Panc1 (cell line): ENCODE measurements at regions of chr1 and their contacts with region 1.

Region 1: DNA sequence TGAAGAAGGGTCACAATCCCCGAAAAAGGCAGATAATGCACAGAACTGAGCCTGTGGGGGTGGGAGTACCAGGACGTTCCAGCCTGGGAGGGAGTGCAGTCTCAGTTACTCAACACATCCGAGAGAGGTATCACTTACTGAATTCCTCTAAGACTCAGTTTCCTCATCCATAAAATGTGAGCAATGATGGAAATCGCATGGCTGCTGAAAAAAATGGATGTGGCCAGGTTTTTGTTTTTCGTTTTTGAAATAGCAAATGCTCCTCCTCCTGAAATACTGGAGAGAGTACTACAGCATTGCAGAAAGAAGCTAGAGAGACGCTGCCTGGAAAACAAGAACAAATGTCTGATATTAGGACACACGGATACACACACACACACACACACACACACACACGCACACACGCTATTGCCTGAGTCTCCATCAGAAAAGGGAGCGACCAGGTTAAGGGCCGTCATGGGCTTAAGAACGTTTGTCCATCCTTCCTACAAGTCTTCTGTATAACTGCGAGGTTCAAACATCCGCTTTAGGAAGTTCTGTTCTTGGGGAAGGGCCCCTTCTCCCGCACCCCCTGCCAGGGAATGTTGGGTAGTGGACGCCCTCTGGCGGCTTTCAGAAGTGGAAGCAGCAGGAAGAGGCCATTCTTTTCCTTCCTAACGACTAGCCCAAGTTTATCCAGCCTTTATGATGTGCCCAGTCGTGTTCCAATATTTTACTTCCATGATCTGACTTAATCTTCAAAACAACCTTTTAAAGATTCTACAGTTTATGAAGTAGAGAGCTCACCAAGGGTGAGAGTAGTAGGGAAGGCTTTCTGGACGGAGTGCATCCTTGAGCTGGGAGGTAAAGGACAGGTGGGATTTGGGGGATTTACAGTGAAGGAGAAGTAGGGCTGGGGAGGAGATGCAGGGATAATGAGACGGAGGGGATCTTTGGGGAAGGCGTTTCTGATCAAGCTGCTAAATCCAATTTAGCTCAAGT is 699 bp upstream of the NES start:
- DNase-seq: no peak
- ATAC-seq: peak; percentile 58
- H3K4me3 ChIP-seq: peak overlapping the region in 1 of 2 experiments; percentile 57; a peak in 3 of 4 replicates
- H3K27ac ChIP-seq: peak overlapping the region; percentile 72
- H3K4me1 ChIP-seq: peaks cover 18% of the 10 kb centered on the region
- H3K27me3 ChIP-seq: no peaks in the 10 kb centered on the region
- CTCF ChIP-seq: peak; percentile 93

Region 2: GRCh38 chr1:156659994-156660751 is 17.7 kb before region 1 on chr1:
- CTCF ChIA-PET with region 1: interaction called, 47 read pairs
- POLR2A ChIA-PET with region 1: interaction called, 5 read pairs
- in situ Hi-C with region 1: no loop called
- intact Hi-C with region 1: loop called (anchors 1 kb)
- DNase-seq: peak; percentile 95
- ATAC-seq: peak; percentile 79
- H3K4me3 ChIP-seq: peak overlapping the region; percentile 23 to 69
- H3K27ac ChIP-seq: peak overlapping the region; percentile 98
- H3K4me1 ChIP-seq: peaks cover 61% of the 10 kb centered on the region
- H3K27me3 ChIP-seq: no peaks in the 10 kb centered on the region
- CTCF ChIP-seq: peak; percentile 100

Region 3: GRCh38 chr1:156711011-156711817 is 33.3 kb after region 1 on chr1:
- CTCF ChIA-PET with region 1: interaction called, 3 read pairs
- POLR2A ChIA-PET with region 1: interaction called, 10 read pairs
- in situ Hi-C with region 1: no loop called
- intact Hi-C with region 1: no loop called
- DNase-seq: no peak
- ATAC-seq: no peak
- H3K4me3 ChIP-seq: no peak overlapping the region
- H3K27ac ChIP-seq: peak overlapping the region; percentile 93
- H3K4me1 ChIP-seq: peaks cover 65% of the 10 kb centered on the region
- H3K27me3 ChIP-seq: no peaks in the 10 kb centered on the region
- CTCF ChIP-seq: no peak

Region 4: DNA sequence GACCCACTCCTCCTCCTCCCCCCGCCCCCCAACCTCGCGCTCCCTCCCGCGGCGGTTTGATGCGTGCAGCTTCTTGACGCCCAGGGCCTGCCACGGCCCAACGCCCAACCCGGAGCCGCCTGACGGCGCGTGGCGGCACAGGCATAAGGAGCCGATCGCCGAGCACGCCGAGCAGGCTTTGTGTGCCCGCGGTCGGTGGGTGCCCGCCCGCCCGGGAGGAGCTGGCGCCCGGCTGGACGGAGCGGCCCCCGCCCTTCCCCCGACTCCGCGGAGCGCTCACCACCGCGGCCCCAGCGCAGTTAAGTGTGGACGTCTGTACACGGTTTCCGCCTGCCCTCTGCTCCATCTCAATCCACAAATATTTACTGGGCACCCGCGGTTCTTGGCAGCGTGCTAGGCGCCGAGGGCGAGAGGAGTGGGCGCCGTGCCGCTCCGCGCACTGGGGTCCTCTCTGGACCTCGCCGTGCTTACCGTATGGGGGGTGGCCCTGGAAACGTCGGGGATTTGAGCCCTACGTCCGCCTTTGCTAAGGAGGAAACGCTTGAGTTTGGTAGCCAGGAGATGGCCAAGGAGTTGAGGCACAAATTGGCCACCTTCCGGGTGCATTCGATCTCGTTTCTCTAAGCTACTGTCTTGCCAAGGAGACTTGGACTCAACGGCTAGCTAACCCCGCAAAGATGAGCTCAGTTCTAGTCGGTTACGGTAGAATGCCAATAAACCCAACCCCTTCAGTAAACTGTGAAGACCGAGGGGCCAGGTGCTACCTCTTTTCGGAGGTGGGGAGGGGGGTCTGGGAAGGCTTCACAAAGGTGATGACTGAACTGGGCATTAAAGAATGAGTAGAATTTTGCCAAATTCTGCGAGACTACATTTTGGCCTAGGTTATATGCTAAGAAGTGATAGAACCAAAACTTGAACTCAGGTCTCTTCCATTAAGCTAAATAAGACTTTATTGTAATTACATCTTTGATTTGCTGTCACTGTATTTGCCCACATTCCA is 74.2 kb after region 1 on chr1:
- CTCF ChIA-PET with region 1: interaction called, 4 read pairs
- POLR2A ChIA-PET with region 1: interaction called, 10 read pairs
- in situ Hi-C with region 1: no loop called
- intact Hi-C with region 1: no loop called
- DNase-seq: no peak
- ATAC-seq: peak; percentile 79
- H3K4me3 ChIP-seq: peak overlapping the region; percentile 77 to 80
- H3K27ac ChIP-seq: peak overlapping the region; percentile 95
- H3K4me1 ChIP-seq: peaks cover 31% of the 10 kb centered on the region
- H3K27me3 ChIP-seq: no peaks in the 10 kb centered on the region
- CTCF ChIP-seq: no peak

Region 5: DNA sequence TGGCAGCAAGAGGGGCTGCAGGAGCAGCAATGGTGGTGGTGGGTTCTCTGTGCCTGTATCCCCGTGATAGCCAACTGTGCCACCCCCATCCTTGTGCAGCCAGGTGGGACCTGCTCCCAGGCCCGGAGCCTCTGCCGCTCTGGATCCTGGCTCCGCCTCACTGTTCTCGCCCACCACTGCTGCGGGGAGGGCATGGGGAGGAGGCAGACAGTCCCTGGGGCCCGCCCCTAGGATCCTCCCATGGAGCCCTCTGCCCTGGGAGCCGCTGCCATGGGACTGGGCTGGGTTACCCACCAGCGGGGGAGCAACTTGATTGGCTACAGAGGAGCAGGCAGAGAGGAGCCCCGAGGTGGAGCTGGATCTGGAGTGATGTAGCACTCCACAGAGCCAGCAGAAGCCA is 1534.4 kb after region 1 on chr1:
- CTCF ChIA-PET with region 1: no interaction called
- POLR2A ChIA-PET with region 1: no interaction called
- in situ Hi-C with region 1: no loop called
- intact Hi-C with region 1: no loop called
- DNase-seq: no peak
- ATAC-seq: no peak
- H3K4me3 ChIP-seq: no peak overlapping the region
- H3K27ac ChIP-seq: no peak overlapping the region
- H3K4me1 ChIP-seq: no peaks in the 10 kb centered on the region
- H3K27me3 ChIP-seq: no peaks in the 10 kb centered on the region; the same call in 1 of the 2 replicates
- CTCF ChIP-seq: no peak